ENCODE measurements at regions of chr14 and their contacts with region 1.

Region 1: GRCh38 chr14:92039719-92040430 is at the start of gene TRIP11:
- DNase-seq: peak; percentile 98
- ATAC-seq: peak; percentile 100
- total RNA-seq, gene TRIP11: 51.2 TPM

Region 2: DNA sequence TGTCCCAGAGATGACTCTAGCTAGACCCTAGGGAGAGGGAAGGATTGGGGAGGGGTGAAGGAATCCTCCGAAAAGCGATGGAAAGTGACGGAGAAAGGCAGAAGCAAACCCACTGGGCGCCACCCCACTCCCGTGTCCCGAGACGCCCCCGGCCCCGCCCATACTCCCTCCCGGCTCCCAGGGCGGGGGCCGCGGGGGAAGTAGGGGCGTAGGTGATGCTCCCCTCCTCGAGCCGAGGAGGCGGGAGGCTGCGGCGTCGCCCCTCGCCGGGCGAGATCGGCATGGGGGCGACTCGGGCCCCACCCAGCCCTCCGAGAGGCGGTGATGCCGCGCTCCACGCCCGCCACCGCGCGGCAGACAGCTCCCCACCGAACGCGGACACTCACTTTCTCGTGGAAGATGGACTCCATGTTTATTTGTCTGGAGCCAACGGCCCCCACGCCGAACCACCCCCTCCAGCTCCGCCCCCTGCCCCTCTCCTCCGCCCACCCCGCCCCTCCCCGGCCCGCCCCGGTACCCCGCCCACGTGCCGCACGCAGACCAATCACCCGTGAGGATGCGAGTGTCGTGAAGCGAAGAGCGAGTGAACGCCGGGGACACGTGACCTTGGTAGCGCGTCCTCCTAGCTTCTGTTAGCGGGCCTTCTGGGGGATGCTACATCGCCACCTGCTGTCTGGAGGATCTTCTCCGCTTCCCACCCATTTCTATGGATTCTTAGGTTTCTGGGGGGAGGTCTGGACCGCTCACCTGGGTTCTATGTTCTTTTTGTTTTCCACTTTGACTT is 66.5 kb after region 1 on chr14 and contains the start of gene ATXN3:
- intact Hi-C with region 1: loop called (anchors 1 kb)
- DNase-seq: peak; percentile 99
- ATAC-seq: peak; percentile 97
- total RNA-seq, gene ATXN3: 16.9 TPM

Measured in Right ventricle myocardium inferior (tissue), 1 donor.